PC-9 (cell line): ENCODE measurements at regions of chr20 and their contacts with region 1.

Region 1: DNA sequence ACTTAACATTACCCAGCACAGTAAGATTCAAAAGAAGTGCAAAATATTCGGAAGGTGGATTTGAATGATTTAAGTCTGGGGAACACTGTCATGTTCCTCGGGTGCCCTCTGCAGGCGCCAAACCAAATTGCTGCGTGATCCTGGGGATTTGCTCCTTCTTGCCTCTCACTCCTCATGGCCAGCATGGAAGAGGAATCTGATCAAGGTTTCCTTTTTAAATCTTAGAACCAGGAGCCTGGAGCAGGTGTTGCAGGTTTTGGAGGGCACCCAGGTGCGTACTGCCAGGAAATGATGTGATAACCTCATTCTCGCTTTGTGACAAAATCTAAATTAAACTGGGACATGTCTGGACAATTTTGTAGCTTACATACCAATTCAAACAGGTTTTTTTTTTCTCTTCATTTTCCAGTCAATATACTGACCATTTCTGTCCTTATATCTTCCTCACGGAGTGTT is 8.1 kb upstream of the PFDN4 start:
- DNase-seq: peak; percentile 64 to 81
- H3K4me3 ChIP-seq: no peak overlapping the region
- H3K27ac ChIP-seq: no peak overlapping the region
- H3K4me1 ChIP-seq: peaks cover 26% of the 10 kb centered on the region
- H3K27me3 ChIP-seq: no peaks in the 10 kb centered on the region
- CTCF ChIP-seq: peak; percentile 98

Region 2: DNA sequence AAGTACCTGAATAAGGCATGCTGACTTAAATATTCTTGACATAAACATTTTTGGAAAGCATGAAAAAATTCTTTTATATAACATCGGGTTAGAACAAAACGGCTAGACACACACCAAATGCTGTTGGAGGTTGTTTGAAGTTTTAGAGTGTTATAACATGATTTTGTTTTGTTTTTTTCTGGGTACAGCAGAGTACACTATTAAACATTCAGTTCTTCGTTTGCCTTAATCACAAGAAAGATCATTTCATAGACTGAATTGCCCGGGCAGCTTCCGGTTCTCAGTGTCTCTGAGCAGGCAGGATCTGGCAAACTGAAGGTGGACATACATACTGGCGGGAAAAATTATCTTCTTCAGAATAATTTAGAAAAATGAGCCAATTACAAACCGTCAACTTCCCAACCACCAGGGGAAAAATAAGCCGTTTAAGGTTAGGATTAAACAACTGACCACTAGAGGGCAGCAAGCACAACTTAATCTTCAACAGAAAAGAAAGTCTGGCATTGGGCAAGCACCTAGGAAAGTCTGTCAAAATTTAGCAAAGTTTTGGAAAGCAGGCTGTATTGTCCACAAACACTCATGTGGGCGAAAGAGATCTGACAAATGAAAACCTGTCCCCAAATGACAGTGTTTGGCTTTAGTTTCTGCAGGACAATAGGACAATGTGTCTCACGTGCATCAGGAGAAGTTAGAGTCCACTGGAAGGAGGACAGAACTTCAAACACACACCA is 621.1 kb before region 1 on chr20:
- CTCF ChIA-PET with region 1: no interaction called
- POLR2A ChIA-PET with region 1: no interaction called
- intact Hi-C with region 1: loop called (anchors 10 kb)
- DNase-seq: peak; percentile 61 to 77
- H3K4me3 ChIP-seq: peak overlapping the region; percentile 49
- H3K27ac ChIP-seq: peak overlapping the region; percentile 91
- H3K4me1 ChIP-seq: peaks cover 64% of the 10 kb centered on the region
- H3K27me3 ChIP-seq: no peaks in the 10 kb centered on the region
- CTCF ChIP-seq: peak; percentile 96

Region 3: GRCh38 chr20:53949319-53949889 is 250.3 kb before region 1 on chr20:
- CTCF ChIA-PET with region 1: no interaction called
- POLR2A ChIA-PET with region 1: no interaction called
- intact Hi-C with region 1: loop called (anchors 2 kb)
- DNase-seq: peak in 1 of 2 experiments; percentile 61
- H3K4me3 ChIP-seq: no peak overlapping the region
- H3K27ac ChIP-seq: no peak overlapping the region
- H3K4me1 ChIP-seq: no peaks in the 10 kb centered on the region
- H3K27me3 ChIP-seq: no peaks in the 10 kb centered on the region
- CTCF ChIP-seq: no peak

Region 4: GRCh38 chr20:54093423-54094267 is 106.1 kb before region 1 on chr20:
- CTCF ChIA-PET with region 1: interaction called, 8 read pairs
- POLR2A ChIA-PET with region 1: no interaction called
- intact Hi-C with region 1: loop called (anchors 1 kb)
- DNase-seq: no peak
- H3K4me3 ChIP-seq: no peak overlapping the region
- H3K27ac ChIP-seq: no peak overlapping the region
- H3K4me1 ChIP-seq: peaks cover 8% of the 10 kb centered on the region; the same call in 1 of the 2 replicates
- H3K27me3 ChIP-seq: no peaks in the 10 kb centered on the region
- CTCF ChIP-seq: no peak

Region 5: GRCh38 chr20:54512722-54513121 is 313.0 kb after region 1 on chr20:
- CTCF ChIA-PET with region 1: interaction called, 11 read pairs
- POLR2A ChIA-PET with region 1: no interaction called
- intact Hi-C with region 1: no loop called
- DNase-seq: no peak
- H3K4me3 ChIP-seq: no peak overlapping the region
- H3K27ac ChIP-seq: no peak overlapping the region
- H3K4me1 ChIP-seq: no peaks in the 10 kb centered on the region
- H3K27me3 ChIP-seq: 0 out of 2 replicates have a peak, but pooled peaks cover 10% of the 10 kb centered on the region
- CTCF ChIP-seq: no peak